Activated CD8-positive, alpha-beta memory T cell treated with anti-CD3 and anti-CD28 coated beads, Interleukin-2, amount 10 ng/mL, durations not matched to agents 7 days and 5 days (primary cell): ENCODE measurements at regions of chr22 and their contacts with region 1.

Region 1: DNA sequence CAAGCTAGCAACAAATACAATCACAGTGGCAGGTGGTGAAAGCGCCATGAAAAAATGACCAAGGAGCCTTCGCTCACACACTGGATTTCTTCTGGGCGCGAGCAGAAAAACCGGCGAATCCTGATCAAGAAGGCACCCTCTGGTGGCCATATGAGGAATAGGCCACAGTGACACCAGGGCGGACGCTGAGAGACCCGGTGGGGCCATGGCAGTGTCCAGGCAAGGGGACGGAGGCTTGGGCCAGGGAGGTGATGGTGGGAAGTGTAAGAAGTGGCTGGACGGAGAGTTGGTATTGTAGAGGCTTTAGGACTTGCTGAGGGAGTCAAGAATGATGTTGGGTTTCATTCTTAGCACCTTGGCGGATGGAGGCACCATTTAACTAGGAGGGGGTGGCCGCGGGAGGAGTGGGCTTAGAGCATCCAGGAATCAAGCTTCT is 16.9 kb upstream of the RAC2 start:
- DNase-seq: peak; percentile 75
- ATAC-seq: peak; percentile 77
- H3K4me3 Mint-ChIP-seq: no peak overlapping the region
- H3K27ac Mint-ChIP-seq: peak overlapping the region; percentile 42
- H3K4me1 Mint-ChIP-seq: peaks cover 23% of the 10 kb centered on the region
- H3K27me3 Mint-ChIP-seq: peaks cover 6% of the 10 kb centered on the region

Region 2: DNA sequence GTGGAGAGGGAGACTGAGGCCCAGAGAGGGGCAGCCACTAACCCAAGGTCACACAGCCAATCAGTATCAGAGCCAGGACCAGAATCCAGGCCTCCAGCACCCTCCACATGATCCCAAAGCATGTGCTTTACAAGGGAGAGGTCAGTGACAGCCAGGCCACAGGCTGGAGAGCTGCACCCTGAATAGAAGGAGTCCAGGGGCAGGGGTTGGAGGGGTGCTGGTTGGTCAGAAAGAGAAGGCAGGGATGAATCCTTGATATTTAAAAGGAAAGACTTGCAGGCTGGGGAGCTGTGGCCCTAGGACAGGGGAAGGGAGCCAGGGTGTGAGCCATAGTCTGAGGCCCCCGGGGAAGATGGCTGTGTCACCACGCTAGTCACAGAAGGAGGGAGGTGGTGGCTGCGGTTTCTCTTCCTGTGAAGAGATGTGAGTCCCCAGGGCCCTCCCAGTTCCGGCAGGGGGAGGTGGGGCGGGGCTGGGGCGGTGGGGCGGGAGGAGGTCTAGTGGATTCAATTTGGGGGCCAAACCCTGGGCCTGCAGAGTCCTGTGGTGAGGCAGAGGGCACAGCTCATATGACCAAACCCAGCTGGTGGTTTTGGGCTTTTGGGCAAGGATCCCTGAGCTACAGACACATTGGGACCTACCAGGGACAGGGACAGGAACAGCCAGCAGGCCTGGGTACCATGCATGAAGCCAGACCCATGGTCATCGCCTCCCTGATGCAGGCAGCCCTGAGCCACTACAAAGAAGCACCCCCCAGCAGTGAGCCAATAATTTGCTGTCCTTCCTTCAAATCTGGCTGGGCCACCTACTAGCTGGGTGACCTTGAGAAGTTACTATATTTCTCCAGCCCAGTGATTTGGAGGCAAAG is 30.9 kb before region 1 on chr22:
- CTCF ChIA-PET with region 1: interaction called, 24 read pairs
- DNase-seq: peak; percentile 97
- ATAC-seq: peak; percentile 77
- H3K4me3 Mint-ChIP-seq: peak overlapping the region; percentile 57
- H3K27ac Mint-ChIP-seq: peak overlapping the region; percentile 97
- H3K4me1 Mint-ChIP-seq: peaks cover 90% of the 10 kb centered on the region
- H3K27me3 Mint-ChIP-seq: no peaks in the 10 kb centered on the region

Region 3: DNA sequence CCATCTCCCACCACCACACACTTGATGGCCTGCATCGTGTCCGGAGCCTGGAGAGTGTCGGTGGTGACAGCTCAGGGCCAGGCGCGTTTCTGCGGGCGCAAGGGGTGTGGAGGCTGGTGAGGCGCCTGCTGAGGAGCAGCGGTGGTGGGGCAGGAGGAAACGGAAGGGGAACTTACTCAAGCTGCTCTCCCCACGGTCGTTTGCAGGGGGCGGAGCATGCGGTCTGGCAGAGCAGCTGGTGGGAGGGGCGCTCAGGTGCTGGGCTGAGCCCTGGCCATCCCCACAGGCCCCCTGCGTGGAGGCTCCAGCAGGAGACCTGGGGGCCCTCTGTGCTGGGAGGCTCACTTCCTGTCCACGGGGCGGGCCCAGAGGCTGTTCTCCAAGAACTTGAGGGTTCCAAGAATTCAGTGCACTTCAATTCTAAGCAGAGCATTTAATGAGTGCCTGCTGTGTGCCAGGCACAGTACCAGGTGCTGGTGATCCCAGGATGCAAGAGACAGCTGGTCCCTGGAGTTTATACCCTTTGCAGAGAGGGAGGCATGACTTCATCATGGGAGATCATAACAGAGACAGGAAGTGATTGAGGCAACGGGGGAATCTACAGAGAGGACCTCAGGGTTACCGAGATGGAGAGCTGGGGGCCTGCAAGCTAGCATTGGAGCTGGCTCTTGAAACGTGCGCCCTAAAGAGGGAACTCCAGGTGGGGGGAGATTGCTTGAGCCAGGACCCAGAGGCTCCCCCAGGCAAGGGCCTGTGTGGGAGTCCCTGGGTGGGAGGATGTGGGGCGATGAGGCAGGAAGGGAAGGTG is 16.6 kb before region 1 on chr22 and contains the start of gene RAC2:
- CTCF ChIA-PET with region 1: interaction called, 106 read pairs
- DNase-seq: peak; percentile 97
- ATAC-seq: peak; percentile 60
- H3K4me3 Mint-ChIP-seq: peak within 1 kb of the TSS; percentile 100
- H3K27ac Mint-ChIP-seq: peak within 1 kb of the TSS; percentile 98
- H3K4me1 Mint-ChIP-seq: peaks cover 49% of the 10 kb centered on the region
- H3K27me3 Mint-ChIP-seq: no peaks in the 10 kb centered on the region
- total RNA-seq, gene RAC2: 834 to 907 TPM

Region 4: GRCh38 chr22:37282385-37282677 is 21.4 kb after region 1 on chr22 and contains the start of gene CYTH4:
- CTCF ChIA-PET with region 1: interaction called, 26 read pairs
- DNase-seq: peak; percentile 90
- ATAC-seq: peak; percentile 90
- H3K4me3 Mint-ChIP-seq: peak within 1 kb of the TSS; percentile 100
- H3K27ac Mint-ChIP-seq: peak within 1 kb of the TSS; percentile 98
- H3K4me1 Mint-ChIP-seq: peaks cover 58% of the 10 kb centered on the region
- H3K27me3 Mint-ChIP-seq: no peaks in the 10 kb centered on the region
- total RNA-seq, gene CYTH4: 97.8 to 123 TPM

Region 5: GRCh38 chr22:37428649-37429586 is 168.0 kb after region 1 on chr22:
- CTCF ChIA-PET with region 1: interaction called, 23 read pairs
- DNase-seq: peak; percentile 69
- ATAC-seq: peak; percentile 56
- H3K4me3 Mint-ChIP-seq: no peak overlapping the region
- H3K27ac Mint-ChIP-seq: no peak overlapping the region
- H3K4me1 Mint-ChIP-seq: peaks cover 18% of the 10 kb centered on the region
- H3K27me3 Mint-ChIP-seq: peaks cover 58% of the 10 kb centered on the region